GM12878 (cell line): ENCODE measurements at regions of chr2 and their contacts with region 1.

Region 1: GRCh38 chr2:17545680-17546613 is 5.5 kb downstream of the VSNL1 start:
- DNase-seq: no peak
- ATAC-seq: no peak
- H3K4me3 ChIP-seq: no peak overlapping the region
- H3K27ac ChIP-seq: no peak overlapping the region
- H3K4me1 ChIP-seq: no peaks in the 10 kb centered on the region
- H3K27me3 ChIP-seq: peaks cover 0 to 4% of the 10 kb centered on the region in 2 experiments; a peak in 3 of 4 replicates
- CTCF ChIP-seq: no peak
- EP300 ChIP-seq: no peak
- POLR2A ChIP-seq: no peak
- RAD21 ChIP-seq: no peak

Region 2: GRCh38 chr2:17495590-17495989 is 50.4 kb before region 1 on chr2:
- CTCF ChIA-PET with region 1: no interaction called
- POLR2A ChIA-PET with region 1: no interaction called
- RAD21 ChIA-PET with region 1: no interaction called
- SMC1A ChIA-PET with region 1: no interaction called
- in situ Hi-C with region 1: no loop called
- intact Hi-C with region 1: loop called (anchors 2 kb)
- DNase-seq: no peak
- ATAC-seq: no peak
- H3K4me3 ChIP-seq: no peak overlapping the region
- H3K27ac ChIP-seq: no peak overlapping the region
- H3K4me1 ChIP-seq: no peaks in the 10 kb centered on the region
- H3K27me3 ChIP-seq: no peaks in the 10 kb centered on the region
- CTCF ChIP-seq: no peak
- EP300 ChIP-seq: no peak
- POLR2A ChIP-seq: no peak
- RAD21 ChIP-seq: no peak

Region 3: DNA sequence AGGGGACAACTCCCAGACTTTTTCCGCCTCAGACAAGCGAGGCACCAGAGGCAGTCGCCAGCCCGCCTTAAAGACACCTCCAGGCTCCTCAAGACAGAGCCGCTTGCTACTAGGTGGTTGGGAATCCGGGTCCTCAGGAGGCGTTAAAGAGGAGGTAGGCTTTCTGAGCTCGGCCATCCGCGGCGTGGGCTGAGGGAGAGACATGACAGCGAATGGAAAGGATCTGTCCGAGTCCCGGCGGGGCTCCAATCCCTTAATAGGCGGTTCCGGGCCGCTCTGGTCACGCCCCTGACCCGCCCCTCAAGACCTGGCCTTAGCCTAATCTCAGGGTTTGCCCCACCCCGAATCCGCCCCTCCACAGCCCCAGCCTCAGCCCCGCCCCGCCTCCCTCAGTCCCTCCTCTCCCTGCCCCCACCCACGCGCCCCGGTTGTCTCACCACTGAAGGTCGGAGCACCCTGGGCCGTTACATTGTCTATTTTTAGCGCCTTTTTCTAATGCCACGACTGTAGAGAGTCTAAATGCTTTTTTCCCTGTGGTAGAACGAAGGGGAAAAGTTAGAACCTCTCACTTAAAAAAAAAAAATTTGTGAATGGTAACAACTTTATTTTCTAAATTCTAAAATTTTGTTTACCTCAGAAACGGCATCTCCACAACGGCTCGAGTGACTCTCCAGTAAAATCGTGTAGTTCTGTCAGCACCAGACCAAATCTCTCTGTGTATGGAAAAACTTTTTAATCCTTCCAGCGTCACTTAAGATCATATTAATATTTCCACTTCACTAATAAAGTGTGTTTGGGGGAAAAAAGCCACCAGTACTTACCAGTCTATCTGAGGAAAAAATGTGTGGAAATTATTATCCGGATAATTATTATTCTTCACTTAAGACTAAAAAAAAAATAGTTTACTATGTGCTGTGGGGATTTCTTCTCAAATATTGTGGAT is 27.5 kb before region 1 on chr2 and contains the start of gene RAD51AP2:
- CTCF ChIA-PET with region 1: no interaction called
- POLR2A ChIA-PET with region 1: no interaction called
- RAD21 ChIA-PET with region 1: no interaction called
- SMC1A ChIA-PET with region 1: no interaction called
- in situ Hi-C with region 1: no loop called
- intact Hi-C with region 1: no loop called
- DNase-seq: peak; percentile 40
- ATAC-seq: peak; percentile 93
- H3K4me3 ChIP-seq: peak within 1 kb of the TSS; percentile 61; the same call in 1 of the 2 replicates
- H3K27ac ChIP-seq: peak within 1 kb of the TSS; percentile 6; the same call in 1 of the 2 replicates
- H3K4me1 ChIP-seq: peaks cover 10% of the 10 kb centered on the region; the same call in 1 of the 2 replicates
- H3K27me3 ChIP-seq: no peaks in the 10 kb centered on the region
- CTCF ChIP-seq: no peak; a peak in 1 of 6 replicates
- EP300 ChIP-seq: no peak
- POLR2A ChIP-seq: peak; percentile 54; the same call in 1 of the 2 replicates
- RAD21 ChIP-seq: no peak
- polyA plus RNA-seq, gene RAD51AP2: 0.02 TPM in 1 of 2 experiments, not detected in the other

Region 4: GRCh38 chr2:17557596-17557995 is 11.6 kb after region 1 on chr2:
- CTCF ChIA-PET with region 1: no interaction called
- POLR2A ChIA-PET with region 1: no interaction called
- RAD21 ChIA-PET with region 1: no interaction called
- SMC1A ChIA-PET with region 1: no interaction called
- in situ Hi-C with region 1: no loop called
- intact Hi-C with region 1: no loop called
- DNase-seq: no peak
- ATAC-seq: no peak
- H3K4me3 ChIP-seq: no peak overlapping the region
- H3K27ac ChIP-seq: no peak overlapping the region
- H3K4me1 ChIP-seq: no peaks in the 10 kb centered on the region
- H3K27me3 ChIP-seq: no peaks in the 10 kb centered on the region; a peak in 1 of 4 replicates
- CTCF ChIP-seq: no peak
- EP300 ChIP-seq: no peak
- POLR2A ChIP-seq: no peak
- RAD21 ChIP-seq: no peak